CD4-positive, alpha-beta memory T cell (primary cell): ENCODE measurements at regions of chr3 and their contacts with region 1.

Region 1: DNA sequence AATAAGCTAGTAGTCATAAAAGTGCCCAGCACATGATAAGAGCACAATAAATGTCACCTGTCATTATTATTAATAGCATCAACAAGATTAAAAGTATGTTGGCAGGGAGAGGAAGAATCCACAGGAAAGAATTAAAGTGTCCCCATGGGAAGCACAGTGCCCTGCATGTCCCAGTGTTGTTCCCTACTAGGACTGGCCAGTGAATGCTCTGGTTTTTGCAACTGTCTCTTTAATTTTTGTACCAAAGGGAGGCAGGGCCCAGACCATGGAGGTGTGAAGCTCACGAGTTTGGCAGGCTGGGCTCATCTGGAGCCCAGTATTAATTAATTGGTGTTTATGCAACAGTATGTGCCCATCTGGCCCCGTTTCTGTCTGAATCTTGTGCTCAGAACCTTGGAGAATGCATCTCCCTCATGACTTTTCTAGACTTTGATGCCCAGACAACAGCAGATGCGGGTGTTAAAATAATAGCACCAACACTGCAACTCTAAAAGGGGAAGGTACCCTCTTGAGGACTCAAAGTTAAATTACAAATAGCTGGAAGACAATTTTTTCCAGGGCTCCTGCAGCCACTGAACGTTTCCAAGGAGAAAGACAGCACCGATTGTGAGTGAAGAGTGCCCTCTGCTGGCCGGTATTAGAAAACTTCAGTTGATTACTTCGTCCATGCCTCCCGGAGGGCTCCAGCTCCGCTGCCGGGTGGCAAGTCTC is 71.9 kb upstream of the SPATA12 start:
- DNase-seq: peak; percentile 53 to 67 (median 61)
- H3K4me3 ChIP-seq: no peak overlapping the region
- H3K4me3 Mint-ChIP-seq: peak overlapping the region in 1 of 8 donors; percentile 18
- H3K27ac ChIP-seq: no peak overlapping the region
- H3K27ac Mint-ChIP-seq: peak overlapping the region in 3 of 7 donors; percentile 14 to 32 (median 15)
- H3K4me1 ChIP-seq: peaks cover 9% of the 10 kb centered on the region
- H3K4me1 Mint-ChIP-seq: peaks cover 9 to 28% (median 17%) of the 10 kb centered on the region in 4 donors
- H3K27me3 ChIP-seq: no peaks in the 10 kb centered on the region
- H3K27me3 Mint-ChIP-seq: peaks cover 7 to 9% of the 10 kb centered on the region in 2 donors

Region 2: DNA sequence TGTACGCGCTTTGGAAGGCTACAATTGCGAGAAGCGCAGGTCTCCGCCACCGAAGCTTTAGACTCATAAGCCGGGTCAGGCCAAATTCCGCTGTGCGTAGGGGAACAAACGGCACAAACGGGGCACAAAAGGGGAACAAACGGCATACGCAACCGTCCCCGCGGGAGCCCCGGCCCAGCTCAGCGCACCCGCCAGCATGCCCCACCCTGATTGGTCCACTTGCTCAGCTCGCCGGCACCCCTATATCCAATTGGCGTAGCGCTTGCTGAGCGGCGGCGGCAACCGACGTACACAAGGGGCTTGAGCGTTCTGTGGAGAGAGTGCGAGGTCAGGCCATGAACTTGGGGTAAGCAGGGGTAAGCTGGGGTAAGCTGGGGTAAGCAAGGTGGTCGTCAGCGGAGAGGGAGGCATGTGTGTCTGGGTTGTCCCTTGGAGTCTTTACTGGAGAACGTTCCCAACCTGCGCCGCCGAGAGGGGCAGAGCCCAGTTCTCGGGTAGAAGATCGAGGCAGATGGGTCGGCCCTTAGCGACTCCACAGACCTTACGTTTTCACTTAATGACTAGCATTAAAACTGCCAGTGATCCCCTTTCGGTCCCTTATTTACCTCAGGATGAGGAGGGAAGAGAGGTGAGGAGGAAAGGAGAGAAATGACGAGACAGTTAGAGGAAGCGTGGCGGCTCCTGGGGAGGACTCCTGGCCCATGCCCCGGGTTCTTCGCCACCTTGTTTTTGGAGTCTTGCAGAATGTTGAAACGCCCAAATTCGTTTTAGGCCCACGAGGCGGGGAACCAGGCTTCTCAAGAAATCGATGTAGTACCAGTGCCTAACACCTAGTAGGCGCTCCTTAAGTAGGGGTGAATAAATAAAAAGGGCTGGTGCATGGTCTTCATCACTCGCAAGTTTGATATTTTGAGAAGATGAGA is 431.4 kb before region 1 on chr3 and contains the start of gene CCDC66:
- CTCF ChIA-PET with region 1: no interaction called
- POLR2A ChIA-PET with region 1: no interaction called
- intact Hi-C with region 1: loop called (anchors 1 kb)
- DNase-seq: peak; percentile 92 to 95 (median 93)
- H3K4me3 ChIP-seq: peak within 1 kb of the TSS; percentile 90 to 91
- H3K4me3 Mint-ChIP-seq: peak within 1 kb of the TSS; percentile 95 to 100 (median 99)
- H3K27ac ChIP-seq: peak within 1 kb of the TSS; percentile 91
- H3K27ac Mint-ChIP-seq: peak within 1 kb of the TSS; percentile 98 to 100 (median 99)
- H3K4me1 ChIP-seq: peaks cover 24% of the 10 kb centered on the region
- H3K4me1 Mint-ChIP-seq: peaks cover 15 to 42% (median 29%) of the 10 kb centered on the region in 4 donors
- H3K27me3 ChIP-seq: no peaks in the 10 kb centered on the region
- H3K27me3 Mint-ChIP-seq: no peaks in the 10 kb centered on the region
- total RNA-seq, gene CCDC66: 93.4 to 104 TPM

Region 3: GRCh38 chr3:56702490-56703315 is 285.9 kb before region 1 on chr3:
- CTCF ChIA-PET with region 1: interaction called, 321 read pairs
- POLR2A ChIA-PET with region 1: interaction called, 30 read pairs
- intact Hi-C with region 1: loop called (anchors 1 kb)
- DNase-seq: peak; percentile 57 to 70 (median 66)
- H3K4me3 ChIP-seq: no peak overlapping the region
- H3K4me3 Mint-ChIP-seq: no peak overlapping the region
- H3K27ac ChIP-seq: no peak overlapping the region
- H3K27ac Mint-ChIP-seq: peak overlapping the region in 3 of 7 donors; percentile 15 to 42 (median 32)
- H3K4me1 ChIP-seq: peaks cover 16% of the 10 kb centered on the region
- H3K4me1 Mint-ChIP-seq: peaks cover 11 to 21% (median 13%) of the 10 kb centered on the region in 4 donors
- H3K27me3 ChIP-seq: no peaks in the 10 kb centered on the region
- H3K27me3 Mint-ChIP-seq: no peaks in the 10 kb centered on the region

Region 4: GRCh38 chr3:56744016-56744415 is 244.6 kb before region 1 on chr3:
- CTCF ChIA-PET with region 1: interaction called, 11 read pairs
- POLR2A ChIA-PET with region 1: no interaction called
- intact Hi-C with region 1: no loop called
- DNase-seq: no peak
- H3K4me3 ChIP-seq: no peak overlapping the region
- H3K4me3 Mint-ChIP-seq: no peak overlapping the region
- H3K27ac ChIP-seq: no peak overlapping the region
- H3K27ac Mint-ChIP-seq: peak overlapping the region; percentile 6 to 94 (median 83)
- H3K4me1 ChIP-seq: no peaks in the 10 kb centered on the region
- H3K4me1 Mint-ChIP-seq: peaks cover 10 to 25% (median 14%) of the 10 kb centered on the region in 4 donors
- H3K27me3 ChIP-seq: no peaks in the 10 kb centered on the region
- H3K27me3 Mint-ChIP-seq: no peaks in the 10 kb centered on the region

Region 5: DNA sequence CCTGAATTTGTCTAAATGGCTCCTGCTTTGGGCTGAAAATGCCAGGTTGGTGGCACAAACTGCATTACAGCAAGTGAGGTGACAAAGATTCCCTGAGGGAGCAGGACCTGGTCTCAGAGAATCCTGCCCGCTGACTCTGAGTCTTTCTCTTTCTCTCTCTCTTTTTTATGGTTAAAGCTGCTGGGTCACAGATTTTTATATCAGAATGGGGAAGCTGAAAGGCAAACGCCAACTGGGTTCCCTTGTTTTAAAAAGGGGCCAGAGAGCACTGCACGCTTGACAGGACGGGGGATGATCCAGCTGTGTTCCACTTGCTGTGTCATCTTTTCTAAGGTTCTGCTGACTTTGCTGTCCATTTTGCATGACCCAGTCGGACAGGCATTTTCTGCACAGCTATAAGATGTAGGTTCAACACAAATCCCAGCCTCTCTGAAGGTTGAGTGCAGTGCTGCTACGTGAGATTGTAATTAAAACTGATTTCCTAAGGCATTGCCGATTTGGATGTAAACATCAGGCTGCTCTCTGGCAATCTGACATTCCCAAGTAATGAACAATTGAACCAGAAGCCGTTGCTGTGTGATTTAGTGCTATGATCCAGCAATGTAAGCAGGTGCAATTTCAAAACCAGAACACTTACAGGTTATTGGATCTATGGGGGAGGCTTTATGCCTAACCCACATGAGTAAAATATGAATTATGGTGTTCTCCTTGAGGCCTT is 212.6 kb before region 1 on chr3:
- CTCF ChIA-PET with region 1: interaction called, 11 read pairs
- POLR2A ChIA-PET with region 1: no interaction called
- intact Hi-C with region 1: no loop called
- DNase-seq: no peak
- H3K4me3 ChIP-seq: no peak overlapping the region
- H3K4me3 Mint-ChIP-seq: peak overlapping the region in 5 of 8 donors; percentile 16 to 46 (median 41)
- H3K27ac ChIP-seq: no peak overlapping the region
- H3K27ac Mint-ChIP-seq: peak overlapping the region in 6 of 7 donors; percentile 2 to 85 (median 45)
- H3K4me1 ChIP-seq: peaks cover 75% of the 10 kb centered on the region
- H3K4me1 Mint-ChIP-seq: peaks cover 60 to 97% (median 79%) of the 10 kb centered on the region in 4 donors
- H3K27me3 ChIP-seq: no peaks in the 10 kb centered on the region
- H3K27me3 Mint-ChIP-seq: no peaks in the 10 kb centered on the region

Region 6: GRCh38 chr3:56812754-56813650 is 175.6 kb before region 1 on chr3:
- CTCF ChIA-PET with region 1: interaction called, 68 read pairs
- POLR2A ChIA-PET with region 1: interaction called, 8 read pairs
- intact Hi-C with region 1: no loop called
- DNase-seq: no peak
- H3K4me3 ChIP-seq: peak overlapping the region in 1 of 2 donors; percentile 27
- H3K4me3 Mint-ChIP-seq: peak overlapping the region; percentile 39 to 88 (median 73)
- H3K27ac ChIP-seq: peak overlapping the region; percentile 28
- H3K27ac Mint-ChIP-seq: peak overlapping the region; percentile 81 to 96 (median 88)
- H3K4me1 ChIP-seq: peaks cover 81% of the 10 kb centered on the region
- H3K4me1 Mint-ChIP-seq: peaks cover 67 to 85% (median 76%) of the 10 kb centered on the region in 4 donors
- H3K27me3 ChIP-seq: no peaks in the 10 kb centered on the region
- H3K27me3 Mint-ChIP-seq: no peaks in the 10 kb centered on the region

Region 7: GRCh38 chr3:56864090-56864489 is 124.5 kb before region 1 on chr3:
- CTCF ChIA-PET with region 1: interaction called, 21 read pairs
- POLR2A ChIA-PET with region 1: interaction called, 3 read pairs
- intact Hi-C with region 1: no loop called
- DNase-seq: no peak
- H3K4me3 ChIP-seq: no peak overlapping the region
- H3K4me3 Mint-ChIP-seq: peak overlapping the region in 1 of 8 donors; percentile 7
- H3K27ac ChIP-seq: no peak overlapping the region
- H3K27ac Mint-ChIP-seq: peak overlapping the region in 6 of 7 donors; percentile 0 to 74 (median 58)
- H3K4me1 ChIP-seq: peaks cover 50% of the 10 kb centered on the region
- H3K4me1 Mint-ChIP-seq: peaks cover 54 to 87% (median 70%) of the 10 kb centered on the region in 4 donors
- H3K27me3 ChIP-seq: no peaks in the 10 kb centered on the region
- H3K27me3 Mint-ChIP-seq: no peaks in the 10 kb centered on the region

Region 8: DNA sequence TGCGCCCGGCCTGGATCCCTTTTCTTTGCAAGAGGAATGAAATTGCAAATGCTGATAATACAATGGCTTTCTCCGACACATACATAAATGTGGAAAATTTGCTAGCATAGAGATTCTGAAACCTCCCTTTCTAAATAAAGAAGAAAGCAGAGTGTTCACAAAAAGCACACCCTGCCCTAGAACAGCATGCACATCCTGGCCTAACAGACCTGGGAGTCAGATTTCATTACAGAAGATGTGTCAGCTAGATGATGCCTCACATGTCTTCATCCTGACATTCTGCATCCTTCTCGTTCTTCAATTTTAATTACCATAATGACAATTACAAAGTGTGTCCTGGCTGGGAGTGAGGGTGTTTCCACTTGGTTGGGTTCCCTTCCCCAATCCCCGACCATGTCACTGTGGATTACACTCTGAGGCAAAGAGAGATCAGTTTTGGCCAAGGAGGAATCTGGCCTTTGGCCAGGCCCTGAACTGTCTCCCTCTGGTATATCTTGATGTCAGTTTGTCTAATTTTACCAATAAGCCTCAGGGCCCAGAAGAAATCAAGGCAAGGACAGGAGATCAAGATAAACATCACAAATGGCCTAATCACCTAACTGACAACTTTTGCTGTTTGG is 33.0 kb before region 1 on chr3:
- CTCF ChIA-PET with region 1: no interaction called
- POLR2A ChIA-PET with region 1: no interaction called
- intact Hi-C with region 1: no loop called
- DNase-seq: no peak
- H3K4me3 ChIP-seq: no peak overlapping the region
- H3K4me3 Mint-ChIP-seq: no peak overlapping the region
- H3K27ac ChIP-seq: no peak overlapping the region
- H3K27ac Mint-ChIP-seq: peak overlapping the region in 1 of 7 donors; percentile 18
- H3K4me1 ChIP-seq: no peaks in the 10 kb centered on the region
- H3K4me1 Mint-ChIP-seq: peaks cover 2 to 5% (median 5%) of the 10 kb centered on the region in 4 donors
- H3K27me3 ChIP-seq: no peaks in the 10 kb centered on the region
- H3K27me3 Mint-ChIP-seq: peaks cover 0 to 2% of the 10 kb centered on the region in 2 donors

Region 9: GRCh38 chr3:57047974-57048671 is 59.5 kb after region 1 on chr3:
- CTCF ChIA-PET with region 1: no interaction called
- POLR2A ChIA-PET with region 1: no interaction called
- intact Hi-C with region 1: no loop called
- DNase-seq: no peak
- H3K4me3 ChIP-seq: no peak overlapping the region
- H3K4me3 Mint-ChIP-seq: no peak overlapping the region
- H3K27ac ChIP-seq: no peak overlapping the region
- H3K27ac Mint-ChIP-seq: no peak overlapping the region
- H3K4me1 ChIP-seq: no peaks in the 10 kb centered on the region
- H3K4me1 Mint-ChIP-seq: no peaks in the 10 kb centered on the region
- H3K27me3 ChIP-seq: no peaks in the 10 kb centered on the region
- H3K27me3 Mint-ChIP-seq: peaks cover 7 to 11% of the 10 kb centered on the region in 2 donors

Region 10: DNA sequence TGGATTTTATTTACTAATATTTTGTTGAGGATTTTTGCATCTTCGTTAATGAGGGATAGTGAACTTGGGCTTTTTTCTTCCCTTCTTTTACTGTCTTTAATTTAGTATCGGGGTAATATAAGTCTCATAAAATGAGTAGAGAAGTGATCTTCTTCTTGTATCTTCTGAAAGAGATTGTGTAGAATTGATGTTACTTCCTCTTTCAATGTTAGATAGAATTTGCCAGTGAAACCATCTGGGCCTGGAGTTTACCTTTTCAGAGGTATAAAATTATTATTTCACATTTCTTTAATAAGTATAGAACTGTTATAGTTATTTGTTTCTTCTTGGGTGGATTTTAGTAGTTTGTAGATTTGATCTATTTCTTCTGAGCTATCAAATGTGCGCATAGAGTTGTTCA is 203.4 kb after region 1 on chr3:
- CTCF ChIA-PET with region 1: no interaction called
- POLR2A ChIA-PET with region 1: no interaction called
- intact Hi-C with region 1: no loop called
- DNase-seq: no peak
- H3K4me3 ChIP-seq: no peak overlapping the region
- H3K4me3 Mint-ChIP-seq: no peak overlapping the region
- H3K27ac ChIP-seq: no peak overlapping the region
- H3K27ac Mint-ChIP-seq: peak overlapping the region in 1 of 7 donors; percentile 1
- H3K4me1 ChIP-seq: no peaks in the 10 kb centered on the region
- H3K4me1 Mint-ChIP-seq: no peaks in the 10 kb centered on the region
- H3K27me3 ChIP-seq: no peaks in the 10 kb centered on the region
- H3K27me3 Mint-ChIP-seq: peaks cover 7 to 10% of the 10 kb centered on the region in 2 donors

Region 11: GRCh38 chr3:58965865-58966264 is 1977.3 kb after region 1 on chr3:
- CTCF ChIA-PET with region 1: no interaction called
- POLR2A ChIA-PET with region 1: no interaction called
- intact Hi-C with region 1: no loop called
- DNase-seq: no peak
- H3K4me3 ChIP-seq: no peak overlapping the region
- H3K4me3 Mint-ChIP-seq: no peak overlapping the region
- H3K27ac ChIP-seq: no peak overlapping the region
- H3K27ac Mint-ChIP-seq: no peak overlapping the region
- H3K4me1 ChIP-seq: no peaks in the 10 kb centered on the region
- H3K4me1 Mint-ChIP-seq: no peaks in the 10 kb centered on the region
- H3K27me3 ChIP-seq: no peaks in the 10 kb centered on the region
- H3K27me3 Mint-ChIP-seq: no peaks in the 10 kb centered on the region